ENCODE measurements at regions of chr11 and their contacts with region 1.

Region 1: GRCh38 chr11:118621071-118621783 is 13.8 kb downstream of the PHLDB1 start:
- DNase-seq: peak; percentile 51
- ATAC-seq: peak; percentile 79
- H3K4me3 ChIP-seq: peak overlapping the region; percentile 62 to 84
- H3K27ac ChIP-seq: peak overlapping the region; percentile 96
- H3K4me1 ChIP-seq: peaks cover 61 to 73% of the 10 kb centered on the region in 2 experiments
- H3K27me3 ChIP-seq: no peaks in the 10 kb centered on the region
- CTCF ChIP-seq: no peak
- POLR2A ChIP-seq: peak; percentile 46
- RAD21 ChIP-seq: no peak

Region 2: GRCh38 chr11:118634431-118635236 is 13.4 kb after region 1 on chr11:
- CTCF ChIA-PET with region 1: interaction called, 3 read pairs
- POLR2A ChIA-PET with region 1: interaction called, 33 read pairs
- RAD21 ChIA-PET with region 1: interaction called, 3 to 5 read pairs
- intact Hi-C with region 1: no loop called
- DNase-seq: no peak
- ATAC-seq: peak; percentile 94
- H3K4me3 ChIP-seq: peak overlapping the region; percentile 33 to 50
- H3K27ac ChIP-seq: peak overlapping the region; percentile 42; the same call in 1 of the 2 replicates
- H3K4me1 ChIP-seq: peaks cover 9 to 42% of the 10 kb centered on the region in 2 experiments; a peak in 3 of 4 replicates
- H3K27me3 ChIP-seq: no peaks in the 10 kb centered on the region
- CTCF ChIP-seq: peak in 2 of 3 experiments; percentile 10 to 18; a peak in 2 of 6 replicates
- POLR2A ChIP-seq: no peak
- RAD21 ChIP-seq: no peak

Region 3: GRCh38 chr11:118682372-118682771 is 61.1 kb after region 1 on chr11:
- CTCF ChIA-PET with region 1: no interaction called
- POLR2A ChIA-PET with region 1: no interaction called
- RAD21 ChIA-PET with region 1: no interaction called
- intact Hi-C with region 1: no loop called
- DNase-seq: no peak
- ATAC-seq: no peak
- H3K4me3 ChIP-seq: no peak overlapping the region
- H3K27ac ChIP-seq: no peak overlapping the region
- H3K4me1 ChIP-seq: peaks cover 9 to 15% of the 10 kb centered on the region in 2 experiments
- H3K27me3 ChIP-seq: no peaks in the 10 kb centered on the region
- CTCF ChIP-seq: no peak
- POLR2A ChIP-seq: no peak
- RAD21 ChIP-seq: no peak

Region 4: GRCh38 chr11:119196833-119197483 is 575.7 kb after region 1 on chr11:
- CTCF ChIA-PET with region 1: no interaction called
- POLR2A ChIA-PET with region 1: no interaction called
- RAD21 ChIA-PET with region 1: no interaction called
- intact Hi-C with region 1: no loop called
- DNase-seq: peak; percentile 76
- ATAC-seq: peak; percentile 86
- H3K4me3 ChIP-seq: no peak overlapping the region
- H3K27ac ChIP-seq: no peak overlapping the region
- H3K4me1 ChIP-seq: peaks cover 8 to 17% of the 10 kb centered on the region in 2 experiments; a peak in 2 of 4 replicates
- H3K27me3 ChIP-seq: no peaks in the 10 kb centered on the region
- CTCF ChIP-seq: peak; percentile 74 to 93 (median 87); a peak in 5 of 6 replicates
- POLR2A ChIP-seq: no peak
- RAD21 ChIP-seq: peak; percentile 94

Measured in HCT116 (cell line).